ENCODE measurements at regions of chr5 and their contacts with region 1.

Region 1: DNA sequence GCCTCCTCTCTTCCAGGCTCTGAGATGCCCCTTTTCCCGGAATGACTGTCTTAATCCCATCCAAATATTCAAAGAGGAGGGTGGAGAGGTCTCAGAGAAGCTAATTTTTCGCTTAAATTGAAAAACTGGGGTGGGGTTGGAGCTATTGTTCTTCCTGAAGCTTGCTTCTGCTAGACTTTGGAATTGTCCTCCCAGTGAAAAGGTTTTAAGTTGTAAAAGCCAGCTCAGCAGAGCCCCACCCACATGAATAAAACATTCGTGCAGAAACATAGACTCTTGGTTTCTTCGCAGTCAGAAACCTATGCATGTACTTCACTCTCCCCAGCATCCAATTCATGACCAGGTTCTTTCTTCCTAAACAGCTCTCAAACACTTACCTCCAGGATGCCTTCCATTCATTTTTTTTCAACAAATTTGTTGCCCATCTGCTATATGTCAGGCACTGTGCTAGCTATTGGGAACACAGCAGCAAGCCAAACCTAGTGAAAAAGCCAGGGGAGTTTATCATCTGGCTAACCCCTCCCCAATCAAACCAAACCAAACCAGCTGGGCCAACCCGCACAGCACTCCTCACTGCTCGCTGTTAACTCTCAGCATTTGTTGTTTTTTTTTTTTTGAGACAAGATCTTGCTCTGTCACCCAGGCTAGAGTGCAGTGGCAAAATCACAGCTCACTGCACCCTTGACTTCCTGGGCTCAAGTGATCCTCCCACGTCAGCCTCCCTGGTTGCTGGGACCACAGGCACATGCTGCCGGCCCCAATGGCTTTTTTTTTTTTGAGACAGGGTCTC is 37.9 kb upstream of the OCLN start:
- DNase-seq: peak; percentile 45
- ATAC-seq: peak; percentile 69
- H3K4me3 ChIP-seq: peak overlapping the region; percentile 49 to 63 (median 60); a peak in 5 of 6 replicates
- H3K27ac ChIP-seq: peak overlapping the region; percentile 84
- H3K4me1 ChIP-seq: peaks cover 68% of the 10 kb centered on the region
- H3K27me3 ChIP-seq: no peaks in the 10 kb centered on the region
- CTCF ChIP-seq: no peak
- EP300 ChIP-seq: no peak
- POLR2A ChIP-seq: no peak
- RAD21 ChIP-seq: no peak

Region 2: GRCh38 chr5:69184621-69185020 is 270.0 kb before region 1 on chr5:
- CTCF ChIA-PET with region 1: no interaction called
- POLR2A ChIA-PET with region 1: no interaction called
- in situ Hi-C with region 1: no loop called
- intact Hi-C with region 1: no loop called
- DNase-seq: no peak
- ATAC-seq: no peak
- H3K4me3 ChIP-seq: no peak overlapping the region
- H3K27ac ChIP-seq: no peak overlapping the region
- H3K4me1 ChIP-seq: peaks cover 23% of the 10 kb centered on the region
- H3K27me3 ChIP-seq: no peaks in the 10 kb centered on the region; a peak in 1 of 5 replicates
- CTCF ChIP-seq: no peak
- EP300 ChIP-seq: no peak
- POLR2A ChIP-seq: no peak
- RAD21 ChIP-seq: no peak

Region 3: DNA sequence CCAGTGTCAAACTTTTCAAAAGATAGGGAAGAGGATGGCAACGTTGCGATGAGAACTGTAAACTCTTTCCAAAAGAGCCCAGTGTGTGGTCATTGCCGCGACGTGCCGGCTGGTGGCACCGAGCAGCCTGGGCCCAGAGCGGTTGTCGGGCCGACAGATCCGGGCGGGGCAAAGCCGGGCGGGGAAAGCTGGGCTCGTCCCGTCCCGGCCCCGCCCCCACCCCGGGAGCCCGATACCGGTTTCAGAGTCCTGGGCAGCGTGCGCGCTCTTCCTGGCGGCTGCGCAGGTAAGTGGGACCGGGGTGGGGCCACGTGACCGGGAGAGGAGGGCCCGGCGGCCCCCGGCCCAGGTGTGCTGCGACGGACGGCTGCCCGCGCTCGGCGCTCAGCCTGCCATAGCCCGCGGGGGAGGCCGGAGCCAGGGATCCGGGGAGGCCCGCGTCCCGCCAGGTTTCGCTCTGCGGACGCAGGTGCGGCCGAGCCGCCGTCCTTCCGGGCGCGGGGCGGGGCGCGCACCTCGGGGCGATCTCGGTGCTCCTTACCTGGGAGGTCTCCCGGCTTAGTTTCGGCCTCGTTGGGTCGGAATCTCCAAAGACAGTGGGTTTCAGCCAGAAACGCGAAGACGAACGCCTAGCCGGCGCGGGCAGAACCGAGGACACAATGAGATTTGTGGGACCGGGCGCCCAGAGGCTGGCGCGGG is 39.6 kb before region 1 on chr5 and contains the start of gene MARVELD2:
- CTCF ChIA-PET with region 1: no interaction called
- POLR2A ChIA-PET with region 1: interaction called, 7 read pairs
- in situ Hi-C with region 1: no loop called
- intact Hi-C with region 1: loop called (anchors 2 kb)
- DNase-seq: peak; percentile 81
- ATAC-seq: peak; percentile 98
- H3K4me3 ChIP-seq: peak within 1 kb of the TSS; percentile 79 to 97 (median 92)
- H3K27ac ChIP-seq: peak within 1 kb of the TSS; percentile 67
- H3K4me1 ChIP-seq: peaks cover 22% of the 10 kb centered on the region
- H3K27me3 ChIP-seq: no peaks in the 10 kb centered on the region
- CTCF ChIP-seq: peak; percentile 90
- EP300 ChIP-seq: 0 out of 4 replicates have a peak, but pooled peaks of 1 of the 2 experiments have one; percentile 9
- POLR2A ChIP-seq: peak; percentile 45 to 70; a peak in 3 of 4 replicates
- RAD21 ChIP-seq: peak; percentile 96
- total RNA-seq, gene MARVELD2: 13.0 and 15.4 TPM in 2 replicates

Region 4: GRCh38 chr5:69432412-69433206 is 22.0 kb before region 1 on chr5:
- CTCF ChIA-PET with region 1: no interaction called
- POLR2A ChIA-PET with region 1: interaction called, 15 read pairs
- in situ Hi-C with region 1: no loop called
- intact Hi-C with region 1: no loop called
- DNase-seq: no peak
- ATAC-seq: no peak
- H3K4me3 ChIP-seq: no peak overlapping the region
- H3K27ac ChIP-seq: no peak overlapping the region
- H3K4me1 ChIP-seq: peaks cover 5% of the 10 kb centered on the region
- H3K27me3 ChIP-seq: no peaks in the 10 kb centered on the region
- CTCF ChIP-seq: no peak
- EP300 ChIP-seq: no peak
- POLR2A ChIP-seq: no peak
- RAD21 ChIP-seq: no peak

Region 5: DNA sequence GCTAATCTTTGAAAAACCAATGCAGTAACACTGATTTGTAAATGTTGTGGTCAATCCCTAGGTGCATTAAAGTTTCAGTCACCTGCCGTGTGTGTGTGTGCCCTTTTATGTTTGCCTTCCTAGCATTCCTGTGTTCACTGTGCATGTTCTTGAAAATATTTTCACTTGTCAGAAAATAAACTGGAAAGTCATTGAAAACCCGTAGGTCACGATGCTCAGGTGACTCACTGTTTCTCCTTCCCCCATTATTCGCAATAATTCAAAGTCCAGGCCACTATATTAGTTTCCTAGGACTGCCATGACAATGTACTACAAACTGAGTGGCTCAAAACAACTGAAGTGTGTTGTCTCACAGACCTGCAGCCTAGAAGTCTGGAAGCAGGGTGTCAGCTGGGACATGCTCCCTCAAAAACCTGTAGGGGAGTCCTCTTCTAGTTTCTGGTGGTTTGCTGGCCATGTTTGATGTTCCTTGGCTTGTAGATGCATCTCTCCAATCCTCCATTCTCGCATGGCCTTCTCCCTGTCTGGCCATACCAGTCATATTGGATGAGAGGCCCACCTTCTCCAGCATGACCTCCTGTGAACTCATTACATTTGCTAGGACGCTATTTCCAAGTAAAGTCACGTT is 10.4 kb before region 1 on chr5:
- CTCF ChIA-PET with region 1: no interaction called
- POLR2A ChIA-PET with region 1: interaction called, 31 read pairs
- in situ Hi-C with region 1: no loop called
- intact Hi-C with region 1: no loop called
- DNase-seq: peak; percentile 95
- ATAC-seq: peak; percentile 95
- H3K4me3 ChIP-seq: peak overlapping the region in 1 of 3 experiments; percentile 27; a peak in 1 of 6 replicates
- H3K27ac ChIP-seq: peak overlapping the region; percentile 94
- H3K4me1 ChIP-seq: peaks cover 21% of the 10 kb centered on the region
- H3K27me3 ChIP-seq: no peaks in the 10 kb centered on the region
- CTCF ChIP-seq: no peak
- EP300 ChIP-seq: peak; percentile 64 to 74; a peak in 3 of 4 replicates
- POLR2A ChIP-seq: peak in 1 of 2 experiments; percentile 69; a peak in 2 of 4 replicates
- RAD21 ChIP-seq: no peak